Activated CD4-positive, alpha-beta memory T cell treated with anti-CD3 and anti-CD28 coated beads for 36 hours (primary cell): ENCODE measurements at regions of chr1 and their contacts with region 1.

Region 1: GRCh38 chr1:21200767-21201166 is 24.1 kb upstream of the EIF4G3 start:
- DNase-seq: no peak
- H3K4me3 Mint-ChIP-seq: no peak overlapping the region
- H3K27ac Mint-ChIP-seq: no peak overlapping the region
- H3K4me1 Mint-ChIP-seq: no peaks in the 10 kb centered on the region
- H3K27me3 Mint-ChIP-seq: peaks cover 4% of the 10 kb centered on the region

Region 2: GRCh38 chr1:20696397-20697329 is 504.1 kb before region 1 on chr1:
- CTCF ChIA-PET with region 1: interaction called, 129 read pairs
- POLR2A ChIA-PET with region 1: no interaction called
- intact Hi-C with region 1: loop called (anchors 1 kb)
- DNase-seq: peak; percentile 85
- H3K4me3 Mint-ChIP-seq: peak overlapping the region; percentile 77
- H3K27ac Mint-ChIP-seq: no peak overlapping the region
- H3K4me1 Mint-ChIP-seq: peaks cover 6% of the 10 kb centered on the region
- H3K27me3 Mint-ChIP-seq: peaks cover 6% of the 10 kb centered on the region

Region 3: DNA sequence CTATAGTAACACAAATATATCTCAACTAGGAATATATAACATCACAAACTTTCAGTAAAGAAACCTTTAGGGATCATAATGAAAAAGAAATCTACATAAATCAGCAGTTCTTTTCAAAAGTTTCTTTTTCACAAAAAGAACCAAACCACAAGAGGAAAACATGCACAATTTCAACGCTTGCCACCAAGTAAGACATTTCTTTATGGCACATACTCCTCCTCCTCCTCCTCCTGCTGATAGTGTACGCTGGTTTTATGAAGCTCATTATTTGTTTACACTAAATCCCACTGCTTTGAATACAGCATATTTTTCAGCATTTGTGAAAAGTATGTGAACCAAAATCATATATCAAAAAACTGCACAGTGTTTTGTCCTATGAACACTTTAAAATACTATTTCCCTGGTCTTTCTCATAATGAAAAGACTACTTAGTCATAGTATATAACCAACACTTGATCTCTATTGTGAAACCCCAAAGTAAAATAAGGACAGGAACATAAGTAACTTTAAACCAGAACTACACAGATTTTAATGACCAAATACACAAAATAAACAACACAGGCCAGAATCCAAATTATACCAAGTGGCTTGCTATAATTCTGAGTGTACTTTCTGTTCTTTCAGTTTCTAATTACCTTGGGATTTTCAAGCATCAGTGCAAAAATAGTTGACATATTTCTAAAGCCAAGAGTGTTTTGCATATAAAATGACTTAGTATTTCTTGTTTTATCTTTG is 208.3 kb before region 1 on chr1:
- CTCF ChIA-PET with region 1: interaction called, 13 read pairs
- POLR2A ChIA-PET with region 1: no interaction called
- intact Hi-C with region 1: loop called (anchors 10 kb)
- DNase-seq: no peak
- H3K4me3 Mint-ChIP-seq: peak overlapping the region; percentile 40
- H3K27ac Mint-ChIP-seq: peak overlapping the region; percentile 75
- H3K4me1 Mint-ChIP-seq: peaks cover 24% of the 10 kb centered on the region
- H3K27me3 Mint-ChIP-seq: no peaks in the 10 kb centered on the region

Region 4: GRCh38 chr1:21184276-21184675 is 16.5 kb before region 1 on chr1:
- CTCF ChIA-PET with region 1: interaction called, 36 read pairs
- POLR2A ChIA-PET with region 1: interaction called, 6 read pairs
- intact Hi-C with region 1: no loop called
- DNase-seq: no peak
- H3K4me3 Mint-ChIP-seq: no peak overlapping the region
- H3K27ac Mint-ChIP-seq: no peak overlapping the region
- H3K4me1 Mint-ChIP-seq: no peaks in the 10 kb centered on the region
- H3K27me3 Mint-ChIP-seq: peaks cover 1% of the 10 kb centered on the region

Region 5: GRCh38 chr1:21216835-21217811 is 16.4 kb after region 1 on chr1:
- CTCF ChIA-PET with region 1: interaction called, 11 read pairs
- POLR2A ChIA-PET with region 1: no interaction called
- intact Hi-C with region 1: no loop called
- DNase-seq: peak; percentile 81
- H3K4me3 Mint-ChIP-seq: no peak overlapping the region
- H3K27ac Mint-ChIP-seq: peak overlapping the region; percentile 46
- H3K4me1 Mint-ChIP-seq: peaks cover 3% of the 10 kb centered on the region
- H3K27me3 Mint-ChIP-seq: no peaks in the 10 kb centered on the region

Region 6: DNA sequence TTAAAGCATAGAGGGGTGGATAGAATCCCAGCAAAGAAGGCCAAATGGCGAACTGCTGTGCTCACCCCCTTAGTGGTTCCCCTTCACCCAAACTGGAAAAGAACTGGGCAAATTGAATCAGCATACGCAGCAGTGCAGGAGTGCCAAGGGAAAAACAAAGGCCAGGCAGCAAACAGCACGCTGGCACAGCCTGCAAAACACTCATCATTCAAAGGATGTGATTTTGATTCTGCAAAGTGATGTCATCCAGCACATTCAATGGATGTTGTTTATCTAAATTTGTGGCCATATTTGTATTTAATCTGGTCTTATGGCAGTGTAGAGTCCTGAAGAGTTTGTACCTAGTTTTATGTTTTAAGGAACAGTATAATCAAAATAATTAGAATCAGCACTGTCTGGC is 161.3 kb after region 1 on chr1:
- CTCF ChIA-PET with region 1: no interaction called
- POLR2A ChIA-PET with region 1: no interaction called
- intact Hi-C with region 1: no loop called
- DNase-seq: no peak
- H3K4me3 Mint-ChIP-seq: no peak overlapping the region
- H3K27ac Mint-ChIP-seq: peak overlapping the region; percentile 13
- H3K4me1 Mint-ChIP-seq: peaks cover 4% of the 10 kb centered on the region
- H3K27me3 Mint-ChIP-seq: no peaks in the 10 kb centered on the region